B cell (primary cell): ENCODE measurements at regions of chr10 and their contacts with region 1.

Region 1: DNA sequence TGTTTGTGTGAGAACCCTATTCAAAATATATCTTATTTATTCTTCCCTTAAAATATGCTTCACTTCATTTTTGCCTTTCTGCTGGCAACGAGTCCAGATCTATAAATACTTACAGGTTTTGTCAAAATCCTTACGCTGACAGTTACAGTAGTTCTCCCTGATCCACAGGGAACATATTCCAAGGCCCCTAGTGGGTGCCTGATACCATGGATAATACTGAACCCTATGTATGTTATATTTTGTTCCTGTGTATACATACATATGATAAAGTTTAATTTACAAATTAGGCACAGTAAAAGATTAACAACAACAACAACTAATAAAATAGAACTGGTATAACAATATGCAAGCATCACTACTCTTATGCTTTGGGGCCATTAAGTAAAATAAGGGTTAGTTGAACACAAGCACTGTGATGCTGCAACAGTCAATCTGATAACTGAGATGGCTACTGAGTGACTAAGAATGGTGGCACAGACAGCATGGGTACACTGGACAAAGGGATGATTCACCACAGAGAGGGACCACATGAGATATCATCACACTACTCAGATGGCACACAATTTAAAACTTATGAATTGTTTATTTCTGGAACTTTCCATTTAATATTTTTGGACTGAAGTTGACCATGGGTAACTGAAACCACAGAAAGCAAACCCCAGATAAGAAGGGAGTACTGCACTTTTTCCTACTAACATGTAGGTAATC is 29.4 kb upstream of the PCGF5 start:
- DNase-seq: no peak
- ATAC-seq: peak; percentile 21
- H3K4me3 ChIP-seq: peak overlapping the region in 1 of 5 experiments; percentile 6
- H3K4me3 Mint-ChIP-seq: peak overlapping the region; percentile 81
- H3K27ac ChIP-seq: peak overlapping the region in 1 of 2 donors; percentile 68
- H3K27ac Mint-ChIP-seq: peak overlapping the region; percentile 80
- H3K4me1 ChIP-seq: peaks cover 32 to 42% of the 10 kb centered on the region in 2 donors
- H3K4me1 Mint-ChIP-seq: peaks cover 72% of the 10 kb centered on the region
- H3K27me3 ChIP-seq: no peaks in the 10 kb centered on the region
- H3K27me3 Mint-ChIP-seq: no peaks in the 10 kb centered on the region
- CTCF ChIP-seq: no peak

Region 2: DNA sequence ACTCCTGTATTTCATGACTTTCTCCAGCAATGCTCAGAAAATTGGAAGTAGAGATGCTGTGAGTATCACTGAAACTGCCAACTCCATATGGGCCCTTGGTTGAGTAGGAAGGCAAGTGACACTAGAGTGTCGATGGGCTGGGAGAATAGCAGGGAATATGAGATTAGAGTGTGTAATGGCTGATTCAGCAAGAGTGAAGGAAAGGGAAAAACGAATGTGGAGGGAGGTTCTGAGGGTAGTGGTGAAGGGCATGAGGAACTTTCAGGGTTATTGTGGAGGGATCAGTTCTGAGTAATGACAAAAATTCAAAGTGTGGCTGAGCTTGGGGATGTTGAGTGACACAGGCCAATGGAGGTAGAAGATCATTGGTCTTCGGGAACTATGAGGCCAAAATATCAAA is 19.5 kb before region 1 on chr10:
- CTCF ChIA-PET with region 1: interaction called, 4 read pairs
- POLR2A ChIA-PET with region 1: interaction called, 3 read pairs
- intact Hi-C with region 1: loop called (anchors 2 kb)
- DNase-seq: no peak
- ATAC-seq: no peak
- H3K4me3 ChIP-seq: no peak overlapping the region
- H3K4me3 Mint-ChIP-seq: no peak overlapping the region
- H3K27ac ChIP-seq: no peak overlapping the region
- H3K27ac Mint-ChIP-seq: peak overlapping the region; percentile 3
- H3K4me1 ChIP-seq: no peaks in the 10 kb centered on the region
- H3K4me1 Mint-ChIP-seq: peaks cover 58% of the 10 kb centered on the region
- H3K27me3 ChIP-seq: no peaks in the 10 kb centered on the region
- H3K27me3 Mint-ChIP-seq: no peaks in the 10 kb centered on the region
- CTCF ChIP-seq: no peak

Region 3: GRCh38 chr10:91210435-91210834 is 19.4 kb after region 1 on chr10:
- CTCF ChIA-PET with region 1: no interaction called
- POLR2A ChIA-PET with region 1: no interaction called
- intact Hi-C with region 1: loop called (anchors 2 kb)
- DNase-seq: peak; percentile 75
- ATAC-seq: peak; percentile 83
- H3K4me3 ChIP-seq: no peak overlapping the region
- H3K4me3 Mint-ChIP-seq: peak overlapping the region; percentile 36
- H3K27ac ChIP-seq: peak overlapping the region; percentile 54 to 69
- H3K27ac Mint-ChIP-seq: peak overlapping the region; percentile 80
- H3K4me1 ChIP-seq: peaks cover 64 to 66% of the 10 kb centered on the region in 2 donors
- H3K4me1 Mint-ChIP-seq: peaks cover 73% of the 10 kb centered on the region
- H3K27me3 ChIP-seq: no peaks in the 10 kb centered on the region
- H3K27me3 Mint-ChIP-seq: no peaks in the 10 kb centered on the region
- CTCF ChIP-seq: no peak

Region 4: GRCh38 chr10:91389636-91390512 is 198.8 kb after region 1 on chr10:
- CTCF ChIA-PET with region 1: no interaction called
- POLR2A ChIA-PET with region 1: no interaction called
- intact Hi-C with region 1: no loop called
- DNase-seq: peak; percentile 78
- ATAC-seq: peak; percentile 85
- H3K4me3 ChIP-seq: no peak overlapping the region
- H3K4me3 Mint-ChIP-seq: no peak overlapping the region
- H3K27ac ChIP-seq: no peak overlapping the region
- H3K27ac Mint-ChIP-seq: no peak overlapping the region
- H3K4me1 ChIP-seq: no peaks in the 10 kb centered on the region
- H3K4me1 Mint-ChIP-seq: peaks cover 3% of the 10 kb centered on the region
- H3K27me3 ChIP-seq: peaks cover 0 to 3% (median 0%) of the 10 kb centered on the region in 4 experiments
- H3K27me3 Mint-ChIP-seq: peaks cover 33% of the 10 kb centered on the region
- CTCF ChIP-seq: peak; percentile 84